Astrocyte of the cerebellum (primary cell): ENCODE measurements at regions of chr22 and their contacts with region 1.

Region 1: DNA sequence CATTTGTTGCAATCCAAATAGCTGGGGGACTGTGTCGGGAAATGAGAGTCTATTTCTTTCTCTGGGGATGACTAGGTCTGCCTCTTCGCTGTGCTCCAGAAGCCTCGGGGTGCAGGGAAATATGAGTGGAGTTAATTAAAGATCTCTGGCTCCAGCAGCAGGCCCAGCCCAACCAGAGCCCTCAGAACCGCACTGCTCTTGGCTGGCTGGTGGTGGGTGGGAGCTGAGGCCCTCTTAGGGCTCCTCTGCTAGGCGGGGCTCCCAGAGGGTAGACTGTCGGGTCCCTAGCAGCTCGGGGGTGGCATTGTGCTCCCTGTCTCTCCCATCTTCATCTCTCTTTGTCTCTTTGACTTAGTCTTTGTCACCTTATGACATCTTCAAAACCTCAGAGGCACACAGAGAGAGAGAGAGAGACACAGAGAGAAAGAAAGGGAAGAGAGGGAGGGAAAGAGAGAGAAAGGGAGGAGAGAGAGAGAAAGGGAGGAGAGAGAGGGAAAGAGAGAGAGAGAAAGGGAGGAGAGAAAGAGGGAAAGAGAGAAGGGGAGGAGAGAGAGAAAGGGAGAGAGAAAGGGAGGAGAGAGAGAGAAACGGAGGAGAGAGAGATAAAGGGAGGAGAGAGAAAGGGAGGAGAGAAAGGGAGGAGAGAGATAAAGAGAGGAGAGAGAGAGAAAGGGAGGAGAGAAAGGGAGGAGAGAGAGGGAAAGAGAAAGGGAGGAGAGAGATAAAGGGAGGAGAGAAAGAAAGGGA is 20.2 kb downstream of the MPPED1 start:
- DNase-seq: no peak
- H3K4me3 ChIP-seq: no peak overlapping the region
- CTCF ChIP-seq: no peak

Region 2: DNA sequence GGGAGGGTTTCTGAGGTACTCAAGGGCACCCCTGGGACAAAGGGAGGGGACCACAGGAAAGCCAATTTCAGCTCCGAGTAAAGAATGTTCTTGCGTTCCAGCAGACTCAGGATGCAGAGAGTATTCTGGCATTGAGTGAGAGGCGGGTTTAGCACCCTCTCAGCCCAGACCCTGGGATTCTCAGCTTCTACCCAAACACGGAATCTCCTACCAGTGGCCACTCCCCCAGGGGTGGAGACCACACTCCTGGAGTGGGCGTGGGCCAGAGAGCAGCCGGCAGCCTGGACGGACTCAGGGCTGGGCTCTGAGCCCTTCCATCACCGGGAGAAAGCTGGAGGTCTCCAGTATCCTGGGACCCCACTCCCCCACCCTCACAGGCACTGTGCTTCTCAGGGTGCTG is 218.9 kb before region 1 on chr22:
- in situ Hi-C with region 1: no loop called
- DNase-seq: no peak
- H3K4me3 ChIP-seq: no peak overlapping the region
- CTCF ChIP-seq: no peak

Region 3: DNA sequence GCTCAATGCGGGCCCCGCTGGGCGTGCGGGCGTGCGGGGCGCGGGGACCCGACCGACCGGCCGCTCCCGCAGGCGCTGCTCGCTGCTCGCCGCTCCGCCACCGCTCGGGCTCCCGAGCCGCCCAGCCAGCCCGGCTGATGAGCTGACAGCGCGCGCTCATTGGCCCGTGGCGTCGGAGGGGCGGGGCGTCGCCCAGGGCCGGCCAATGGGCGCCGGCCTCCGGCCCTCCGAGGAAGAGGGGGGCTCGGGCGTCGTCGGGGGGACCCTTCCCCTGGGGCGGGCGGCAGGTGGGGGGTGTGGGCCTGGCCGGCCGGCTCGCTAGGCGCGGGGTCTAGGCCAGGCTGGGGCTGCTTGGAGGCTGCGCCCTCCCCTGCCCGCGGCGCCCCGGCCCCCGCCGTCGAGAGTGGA is 88.7 kb before region 1 on chr22 and contains the start of gene SCUBE1:
- in situ Hi-C with region 1: loop called (anchors 5 kb)
- DNase-seq: no peak
- H3K4me3 ChIP-seq: no peak within 1 kb of the TSS
- CTCF ChIP-seq: no peak